MCF 10A (cell line): ENCODE measurements at regions of chr3 and their contacts with region 1.

Region 1: DNA sequence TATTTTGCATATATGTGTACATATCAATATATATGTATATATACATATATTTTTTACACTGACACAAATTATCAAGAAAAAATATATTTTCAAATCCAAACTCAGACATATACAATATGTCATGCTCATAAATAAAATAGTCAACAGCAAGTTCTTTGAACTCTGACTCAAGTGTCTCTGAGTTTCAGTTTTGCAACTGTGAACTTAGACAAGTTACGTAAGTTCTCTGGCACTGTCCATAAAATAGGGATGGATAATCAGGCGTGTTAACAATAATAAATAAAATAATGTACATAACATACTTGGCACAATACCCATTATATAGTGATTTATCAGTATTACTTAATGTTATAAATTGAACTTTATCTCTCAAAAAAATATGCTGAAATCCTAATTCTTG is 12.1 kb upstream of the XRN1 start:
- DNase-seq: peak; percentile 37
- H3K4me3 Mint-ChIP-seq: no peak overlapping the region
- H3K27ac Mint-ChIP-seq: no peak overlapping the region
- H3K4me1 Mint-ChIP-seq: no peaks in the 10 kb centered on the region
- H3K27me3 Mint-ChIP-seq: no peaks in the 10 kb centered on the region
- CTCF ChIP-seq: no peak

Region 2: GRCh38 chr3:142447852-142448823 is 11.8 kb before region 1 on chr3 and contains the start of gene XRN1:
- CTCF ChIA-PET with region 1: no interaction called
- POLR2A ChIA-PET with region 1: interaction called, 11 read pairs
- intact Hi-C with region 1: no loop called
- DNase-seq: peak; percentile 93
- H3K4me3 Mint-ChIP-seq: peak within 1 kb of the TSS; percentile 97
- H3K27ac Mint-ChIP-seq: peak within 1 kb of the TSS; percentile 100
- H3K4me1 Mint-ChIP-seq: peaks cover 28% of the 10 kb centered on the region
- H3K27me3 Mint-ChIP-seq: no peaks in the 10 kb centered on the region
- CTCF ChIP-seq: no peak
- total RNA-seq, gene XRN1: 21.7 and 35.1 TPM in 2 replicates